ENCODE measurements at regions of chr16 and their contacts with region 1.

Region 1: GRCh38 chr16:73129455-73129854 is 81.5 kb upstream of the ZFHX3 start:
- DNase-seq: no peak
- ATAC-seq: no peak
- H3K4me3 ChIP-seq: no peak overlapping the region
- H3K27ac ChIP-seq: no peak overlapping the region
- H3K4me1 ChIP-seq: no peaks in the 10 kb centered on the region
- H3K27me3 ChIP-seq: peaks cover 2% of the 10 kb centered on the region; the same call in 1 of the 2 replicates
- CTCF ChIP-seq: no peak
- POLR2A ChIP-seq: no peak
- RAD21 ChIP-seq: no peak

Region 2: GRCh38 chr16:73161977-73162376 is 32.5 kb after region 1 on chr16:
- CTCF ChIA-PET with region 1: no interaction called
- POLR2A ChIA-PET with region 1: interaction called, 3 read pairs
- RAD21 ChIA-PET with region 1: no interaction called
- intact Hi-C with region 1: loop called (anchors 1 kb)
- DNase-seq: no peak
- ATAC-seq: no peak
- H3K4me3 ChIP-seq: no peak overlapping the region
- H3K27ac ChIP-seq: no peak overlapping the region
- H3K4me1 ChIP-seq: no peaks in the 10 kb centered on the region
- H3K27me3 ChIP-seq: no peaks in the 10 kb centered on the region
- CTCF ChIP-seq: no peak
- POLR2A ChIP-seq: no peak
- RAD21 ChIP-seq: no peak